ENCODE measurements at regions of chr1 and their contacts with region 1.

Region 1: DNA sequence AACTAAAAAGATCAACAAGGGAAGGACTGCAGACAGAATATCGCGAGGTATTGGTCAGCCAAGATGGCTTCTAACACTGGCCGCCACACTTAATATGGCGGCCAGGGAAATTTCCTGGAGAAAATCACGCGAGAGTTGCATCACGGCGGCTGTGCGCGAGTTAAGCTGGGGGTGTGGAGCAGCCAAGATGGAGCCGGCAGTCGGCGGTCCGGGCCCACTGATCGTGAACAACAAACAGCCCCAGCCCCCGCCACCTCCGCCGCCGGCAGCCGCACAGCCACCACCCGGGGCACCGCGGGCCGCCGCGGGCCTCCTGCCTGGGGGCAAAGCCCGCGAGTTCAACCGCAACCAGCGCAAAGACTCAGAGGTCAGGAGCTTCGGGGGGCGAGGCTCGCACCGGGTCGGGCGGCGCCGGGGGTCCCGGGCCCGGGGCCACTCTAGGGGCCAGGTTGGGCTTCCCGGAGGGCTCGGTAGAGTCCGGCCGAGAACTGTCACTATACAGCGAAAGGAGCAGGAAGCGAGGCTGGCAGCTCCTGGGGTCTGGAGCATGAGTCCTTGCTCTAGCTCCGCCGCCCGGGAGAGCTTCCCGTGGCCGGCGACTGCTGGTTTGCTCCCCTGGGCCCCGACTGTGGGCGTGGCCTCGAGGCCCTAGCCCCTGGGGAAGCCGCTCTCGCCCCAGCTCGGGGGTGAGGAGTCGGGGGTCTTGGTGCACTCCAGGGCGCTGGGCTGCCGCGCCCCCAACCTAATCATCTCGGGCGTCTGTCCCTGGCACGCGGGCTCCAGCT is at the start of gene STRIP1:
- DNase-seq: peak; percentile 96
- ATAC-seq: peak; percentile 92
- H3K4me3 Mint-ChIP-seq: peak within 1 kb of the TSS; percentile 82
- H3K27ac Mint-ChIP-seq: peak within 1 kb of the TSS; percentile 86
- H3K4me1 Mint-ChIP-seq: peaks cover 57% of the 10 kb centered on the region
- H3K27me3 Mint-ChIP-seq: no peaks in the 10 kb centered on the region
- total RNA-seq, gene STRIP1: 33.2 to 35.9 TPM

Region 2: GRCh38 chr1:110011527-110012041 is 23.1 kb before region 1 on chr1:
- CTCF ChIA-PET with region 1: interaction called, 49 read pairs
- POLR2A ChIA-PET with region 1: no interaction called
- DNase-seq: peak; percentile 58
- ATAC-seq: peak; percentile 95
- H3K4me3 Mint-ChIP-seq: no peak overlapping the region
- H3K27ac Mint-ChIP-seq: peak overlapping the region; percentile 19
- H3K4me1 Mint-ChIP-seq: peaks cover 3% of the 10 kb centered on the region
- H3K27me3 Mint-ChIP-seq: no peaks in the 10 kb centered on the region

Region 3: DNA sequence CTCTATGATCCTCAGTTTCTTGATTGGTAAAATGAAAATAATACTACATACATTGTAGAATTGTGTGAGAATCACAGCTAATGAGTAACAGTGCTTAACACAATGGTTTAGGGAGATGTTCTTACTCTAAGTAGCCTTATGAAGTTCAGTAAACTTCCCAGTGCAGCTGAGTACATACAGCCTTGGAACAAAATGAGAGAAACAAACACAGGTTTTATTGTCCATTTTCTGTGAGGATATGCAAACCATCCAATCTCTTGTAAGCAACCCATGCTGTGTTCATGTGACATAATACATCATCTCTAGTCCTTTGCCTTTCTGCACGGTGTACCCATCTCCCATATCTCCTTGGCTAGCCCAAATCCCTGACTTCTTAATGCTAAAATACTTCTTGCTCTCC is 14.9 kb before region 1 on chr1:
- CTCF ChIA-PET with region 1: interaction called, 49 read pairs
- POLR2A ChIA-PET with region 1: no interaction called
- DNase-seq: no peak
- ATAC-seq: no peak
- H3K4me3 Mint-ChIP-seq: no peak overlapping the region
- H3K27ac Mint-ChIP-seq: no peak overlapping the region
- H3K4me1 Mint-ChIP-seq: no peaks in the 10 kb centered on the region
- H3K27me3 Mint-ChIP-seq: no peaks in the 10 kb centered on the region

Region 4: GRCh38 chr1:110053557-110054428 is 19.1 kb after region 1 on chr1:
- CTCF ChIA-PET with region 1: interaction called, 41 read pairs
- POLR2A ChIA-PET with region 1: interaction called, 4 read pairs
- DNase-seq: peak; percentile 74
- ATAC-seq: peak; percentile 74
- H3K4me3 Mint-ChIP-seq: no peak overlapping the region
- H3K27ac Mint-ChIP-seq: no peak overlapping the region
- H3K4me1 Mint-ChIP-seq: no peaks in the 10 kb centered on the region
- H3K27me3 Mint-ChIP-seq: no peaks in the 10 kb centered on the region

Region 5: GRCh38 chr1:110060034-110060661 is 25.5 kb after region 1 on chr1:
- CTCF ChIA-PET with region 1: interaction called, 41 read pairs
- POLR2A ChIA-PET with region 1: interaction called, 3 read pairs
- DNase-seq: peak; percentile 80
- ATAC-seq: peak; percentile 74
- H3K4me3 Mint-ChIP-seq: no peak overlapping the region
- H3K27ac Mint-ChIP-seq: no peak overlapping the region
- H3K4me1 Mint-ChIP-seq: peaks cover 7% of the 10 kb centered on the region
- H3K27me3 Mint-ChIP-seq: peaks cover 2% of the 10 kb centered on the region

Region 6: GRCh38 chr1:110106013-110106941 is 71.6 kb after region 1 on chr1:
- CTCF ChIA-PET with region 1: interaction called, 15 read pairs
- POLR2A ChIA-PET with region 1: no interaction called
- DNase-seq: peak; percentile 70
- ATAC-seq: peak; percentile 77
- H3K4me3 Mint-ChIP-seq: no peak overlapping the region
- H3K27ac Mint-ChIP-seq: no peak overlapping the region
- H3K4me1 Mint-ChIP-seq: no peaks in the 10 kb centered on the region
- H3K27me3 Mint-ChIP-seq: peaks cover 8% of the 10 kb centered on the region

Region 7: DNA sequence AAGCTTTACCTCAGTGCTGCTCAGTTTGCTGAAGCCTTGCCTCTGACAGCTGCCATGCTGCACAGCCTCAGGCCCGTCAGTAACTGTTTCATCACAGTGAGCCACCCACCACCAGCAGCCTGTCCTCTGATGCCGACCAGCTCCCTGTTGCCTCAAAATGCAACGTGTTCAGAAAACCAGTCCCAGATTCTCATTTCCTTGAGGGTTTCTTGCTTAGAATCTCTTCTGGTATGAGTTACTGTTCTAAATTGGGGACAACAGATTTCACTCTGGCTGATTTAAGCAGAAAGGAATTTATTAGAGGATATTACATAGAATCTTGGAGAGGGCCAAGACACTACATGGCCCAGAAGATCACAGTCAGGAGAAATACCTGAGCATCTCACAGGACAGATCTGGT is 88.6 kb after region 1 on chr1:
- CTCF ChIA-PET with region 1: no interaction called
- POLR2A ChIA-PET with region 1: no interaction called
- DNase-seq: no peak
- ATAC-seq: no peak
- H3K4me3 Mint-ChIP-seq: no peak overlapping the region
- H3K27ac Mint-ChIP-seq: no peak overlapping the region
- H3K4me1 Mint-ChIP-seq: no peaks in the 10 kb centered on the region
- H3K27me3 Mint-ChIP-seq: peaks cover 22% of the 10 kb centered on the region

Region 8: GRCh38 chr1:110188035-110188618 is 153.5 kb after region 1 on chr1:
- CTCF ChIA-PET with region 1: no interaction called
- POLR2A ChIA-PET with region 1: no interaction called
- DNase-seq: no peak
- ATAC-seq: no peak
- H3K4me3 Mint-ChIP-seq: no peak overlapping the region
- H3K27ac Mint-ChIP-seq: no peak overlapping the region
- H3K4me1 Mint-ChIP-seq: no peaks in the 10 kb centered on the region
- H3K27me3 Mint-ChIP-seq: peaks cover 12% of the 10 kb centered on the region

Region 9: GRCh38 chr1:110262846-110263631 is 228.4 kb after region 1 on chr1:
- CTCF ChIA-PET with region 1: no interaction called
- POLR2A ChIA-PET with region 1: no interaction called
- DNase-seq: peak; percentile 36
- ATAC-seq: peak; percentile 69
- H3K4me3 Mint-ChIP-seq: no peak overlapping the region
- H3K27ac Mint-ChIP-seq: no peak overlapping the region
- H3K4me1 Mint-ChIP-seq: no peaks in the 10 kb centered on the region
- H3K27me3 Mint-ChIP-seq: peaks cover 5% of the 10 kb centered on the region

Region 10: DNA sequence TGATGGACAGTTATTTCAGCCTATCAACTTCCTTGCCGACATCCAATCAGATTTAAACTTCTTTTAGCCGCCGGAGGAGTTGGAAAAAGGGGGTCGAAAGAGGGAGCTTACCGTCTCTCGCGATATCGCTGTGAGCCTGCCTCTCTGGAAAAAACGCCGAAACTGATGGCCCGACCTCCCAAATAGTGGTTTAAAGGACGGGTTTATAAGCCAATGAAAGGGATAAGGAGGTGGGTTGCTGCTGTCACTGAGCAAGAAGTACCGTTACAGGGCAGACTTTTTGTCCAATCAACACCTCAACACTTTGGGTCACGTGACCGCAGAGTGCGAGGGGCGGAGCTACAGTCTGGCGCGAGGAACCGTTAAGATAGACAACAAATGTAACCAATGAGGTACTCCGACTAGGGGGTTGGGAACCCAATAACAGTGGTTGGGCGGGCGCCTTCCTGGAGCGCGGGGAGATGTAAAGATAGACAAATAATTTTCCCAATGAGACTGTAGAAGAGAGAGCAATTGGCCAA is 304.3 kb after region 1 on chr1 and contains the start of gene RBM15:
- CTCF ChIA-PET with region 1: interaction called, 3 read pairs
- POLR2A ChIA-PET with region 1: interaction called, 11 read pairs
- DNase-seq: peak; percentile 99
- ATAC-seq: peak; percentile 82
- H3K4me3 Mint-ChIP-seq: no peak within 1 kb of the TSS
- H3K27ac Mint-ChIP-seq: no peak within 1 kb of the TSS
- H3K4me1 Mint-ChIP-seq: peaks cover 52% of the 10 kb centered on the region
- H3K27me3 Mint-ChIP-seq: no peaks in the 10 kb centered on the region
- total RNA-seq, gene RBM15: 72.0 to 75.5 TPM

Measured in activated CD8-positive, alpha-beta T cell treated with anti-CD3 and anti-CD28 coated beads, Interleukin-2, amount 10 ng/mL, durations not matched to agents 7 days and 5 days (primary cell).